Naive thymus-derived CD8-positive, alpha-beta T cell (primary cell): ENCODE measurements at regions of chr11 and their contacts with region 1.

Region 1: GRCh38 chr11:59550368-59550841 is 39.1 kb downstream of the OR4D9 start:
- DNase-seq: peak; percentile 74 to 94 (median 90)
- ATAC-seq: peak; percentile 86 to 91
- H3K4me3 Mint-ChIP-seq: peak overlapping the region; percentile 85 to 97 (median 90)
- H3K27ac Mint-ChIP-seq: peak overlapping the region; percentile 77 to 100 (median 92)
- H3K4me1 Mint-ChIP-seq: peaks cover 13 to 37% (median 33%) of the 10 kb centered on the region in 4 donors
- H3K27me3 Mint-ChIP-seq: peaks cover 0 to 9% (median 0%) of the 10 kb centered on the region in 5 donors

Region 2: DNA sequence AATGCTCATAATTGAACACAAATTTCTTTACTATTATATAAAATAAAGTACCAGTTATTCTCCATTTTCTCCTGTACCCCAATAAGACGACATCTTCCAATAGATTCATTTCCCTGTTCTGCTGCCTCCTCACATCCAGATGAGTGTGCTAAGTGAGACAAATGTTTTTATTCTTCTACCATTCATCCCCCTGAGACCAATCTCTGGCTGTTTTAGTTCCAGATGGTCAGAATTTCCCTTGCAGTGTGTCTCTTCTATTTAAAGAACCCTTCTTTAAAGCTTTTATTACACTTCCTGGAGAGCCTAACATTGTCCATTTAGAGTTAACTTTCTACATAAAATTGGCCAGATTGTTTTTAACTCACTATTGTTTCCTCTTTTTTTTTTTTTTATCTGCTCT is 652.3 kb before region 1 on chr11:
- POLR2A ChIA-PET with region 1: no interaction called
- DNase-seq: no peak
- ATAC-seq: no peak
- H3K4me3 Mint-ChIP-seq: no peak overlapping the region
- H3K27ac Mint-ChIP-seq: no peak overlapping the region
- H3K4me1 Mint-ChIP-seq: peaks cover 0 to 5% (median 0%) of the 10 kb centered on the region in 4 donors
- H3K27me3 Mint-ChIP-seq: peaks cover 20 to 38% (median 31%) of the 10 kb centered on the region in 5 donors

Region 3: GRCh38 chr11:59523541-59523940 is 26.9 kb before region 1 on chr11:
- POLR2A ChIA-PET with region 1: no interaction called
- DNase-seq: no peak
- ATAC-seq: no peak
- H3K4me3 Mint-ChIP-seq: no peak overlapping the region
- H3K27ac Mint-ChIP-seq: peak overlapping the region in 2 of 10 donors; percentile 20 to 45
- H3K4me1 Mint-ChIP-seq: no peaks in the 10 kb centered on the region
- H3K27me3 Mint-ChIP-seq: peaks cover 0 to 8% (median 2%) of the 10 kb centered on the region in 5 donors

Region 4: GRCh38 chr11:59560702-59561469 is 10.5 kb after region 1 on chr11:
- POLR2A ChIA-PET with region 1: interaction called, 27 read pairs
- DNase-seq: peak; percentile 67 to 90 (median 79)
- ATAC-seq: peak; percentile 70 to 75
- H3K4me3 Mint-ChIP-seq: peak overlapping the region; percentile 82 to 99 (median 92)
- H3K27ac Mint-ChIP-seq: peak overlapping the region; percentile 87 to 100 (median 95)
- H3K4me1 Mint-ChIP-seq: peaks cover 21 to 61% (median 51%) of the 10 kb centered on the region in 4 donors
- H3K27me3 Mint-ChIP-seq: peaks cover 0 to 3% (median 0%) of the 10 kb centered on the region in 5 donors

Region 5: GRCh38 chr11:59668950-59669610 is 118.7 kb after region 1 on chr11 and contains the start of gene PATL1:
- POLR2A ChIA-PET with region 1: interaction called, 19 read pairs
- DNase-seq: peak; percentile 98 to 100 (median 99)
- ATAC-seq: peak; percentile 91
- H3K4me3 Mint-ChIP-seq: peak within 1 kb of the TSS; percentile 96 to 99 (median 97)
- H3K27ac Mint-ChIP-seq: peak within 1 kb of the TSS; percentile 96 to 100 (median 100)
- H3K4me1 Mint-ChIP-seq: peaks cover 18 to 44% (median 42%) of the 10 kb centered on the region in 4 donors
- H3K27me3 Mint-ChIP-seq: no peaks in the 10 kb centered on the region
- polyA plus RNA-seq, gene PATL1: 3.2 to 8.2 (median 3.8) TPM